ENCODE measurements at regions of chr3 and their contacts with region 1.

Region 1: DNA sequence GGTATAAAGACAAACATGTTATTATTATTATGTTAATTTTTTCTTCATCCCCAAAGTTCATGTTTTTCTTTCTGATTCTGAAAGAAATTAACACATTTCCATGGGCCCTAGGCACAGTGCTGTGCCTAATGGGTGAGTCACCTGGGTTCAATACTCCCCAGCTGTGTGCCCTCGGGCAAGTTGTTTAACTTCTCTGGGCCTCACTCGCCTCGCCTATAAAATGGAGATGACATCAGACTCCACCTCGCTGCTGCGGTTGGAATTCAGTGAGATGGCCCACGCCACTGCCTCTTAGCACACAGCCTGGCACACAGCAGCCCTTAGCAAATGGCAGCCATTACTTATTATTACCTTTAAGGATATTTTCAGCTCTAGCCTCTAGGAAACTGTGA is 22.6 kb downstream of the DNASE1L3 start:
- DNase-seq: no peak
- H3K4me3 Mint-ChIP-seq: no peak overlapping the region
- H3K27ac Mint-ChIP-seq: no peak overlapping the region
- H3K4me1 Mint-ChIP-seq: no peaks in the 10 kb centered on the region
- H3K27me3 Mint-ChIP-seq: no peaks in the 10 kb centered on the region
- CTCF ChIP-seq: no peak

Region 2: DNA sequence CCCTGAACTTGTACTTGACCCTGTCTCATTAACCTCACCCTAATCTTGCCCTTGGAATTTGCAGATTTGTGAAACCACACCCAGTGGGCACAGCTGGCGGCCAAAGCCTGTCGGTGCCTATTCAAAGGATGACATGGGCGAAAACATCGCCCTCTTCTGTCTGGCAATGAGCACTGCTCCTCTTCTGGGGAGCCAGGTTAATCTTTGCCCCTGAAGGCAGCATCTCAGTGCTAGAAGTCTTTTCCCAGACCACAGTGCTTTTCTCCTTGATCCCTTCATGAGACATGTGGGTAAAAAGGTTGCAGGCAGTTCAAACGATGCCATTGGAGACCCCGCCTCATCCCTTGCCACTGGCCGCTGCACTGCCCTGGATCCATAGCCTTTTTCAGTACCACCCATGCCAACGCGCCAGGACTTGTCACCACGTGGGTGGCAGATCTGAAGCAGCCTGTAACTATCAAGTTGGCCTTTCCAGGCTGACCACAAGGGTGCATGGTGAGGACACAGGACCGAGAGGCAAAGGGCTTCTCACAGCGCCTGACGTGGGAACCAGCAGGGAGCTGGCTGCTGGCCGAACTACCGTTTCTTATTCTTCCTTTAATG is 29.1 kb after region 1 on chr3:
- CTCF ChIA-PET with region 1: interaction called, 24 read pairs
- intact Hi-C with region 1: loop called (anchors 1 kb)
- DNase-seq: peak; percentile 64
- H3K4me3 Mint-ChIP-seq: peak overlapping the region; percentile 59
- H3K27ac Mint-ChIP-seq: no peak overlapping the region
- H3K4me1 Mint-ChIP-seq: peaks cover 25% of the 10 kb centered on the region
- H3K27me3 Mint-ChIP-seq: peaks cover 20% of the 10 kb centered on the region
- CTCF ChIP-seq: peak; percentile 70

Region 3: DNA sequence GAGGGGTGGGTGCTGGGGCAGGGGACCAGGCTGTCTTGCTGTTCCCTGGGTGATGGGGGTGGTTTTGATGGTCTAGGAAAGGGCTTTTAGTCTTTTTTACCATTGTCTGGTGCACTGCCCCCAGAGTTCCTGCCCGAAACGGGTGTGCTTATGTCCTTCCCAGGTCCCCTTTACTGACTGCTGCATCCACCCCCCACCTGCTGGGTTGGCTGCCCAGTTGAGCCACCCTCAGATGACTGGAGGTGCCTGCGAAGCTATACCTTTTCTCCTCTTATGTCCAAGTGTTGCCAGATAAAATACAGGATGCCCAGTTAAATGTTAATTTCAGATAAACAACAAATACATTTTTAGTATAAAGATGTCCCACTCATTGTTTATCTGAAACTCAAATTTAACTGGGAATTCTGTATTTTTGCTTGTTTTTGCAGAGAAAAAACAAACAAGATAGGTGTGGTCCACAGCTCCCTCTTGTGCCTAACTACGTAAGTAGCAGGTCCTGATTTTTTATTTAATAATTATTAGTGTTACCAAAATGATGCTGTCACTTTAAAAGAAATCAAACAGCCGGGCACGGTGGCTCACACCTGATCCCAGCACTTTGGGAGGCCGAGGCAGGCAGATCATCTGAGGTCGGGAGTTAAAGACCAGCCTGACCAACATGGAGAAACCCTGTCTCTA is 111.8 kb after region 1 on chr3:
- CTCF ChIA-PET with region 1: interaction called, 38 read pairs
- intact Hi-C with region 1: loop called (anchors 1 kb)
- DNase-seq: peak; percentile 14
- H3K4me3 Mint-ChIP-seq: no peak overlapping the region
- H3K27ac Mint-ChIP-seq: no peak overlapping the region
- H3K4me1 Mint-ChIP-seq: no peaks in the 10 kb centered on the region
- H3K27me3 Mint-ChIP-seq: peaks cover 21% of the 10 kb centered on the region
- CTCF ChIP-seq: peak; percentile 30

Region 4: DNA sequence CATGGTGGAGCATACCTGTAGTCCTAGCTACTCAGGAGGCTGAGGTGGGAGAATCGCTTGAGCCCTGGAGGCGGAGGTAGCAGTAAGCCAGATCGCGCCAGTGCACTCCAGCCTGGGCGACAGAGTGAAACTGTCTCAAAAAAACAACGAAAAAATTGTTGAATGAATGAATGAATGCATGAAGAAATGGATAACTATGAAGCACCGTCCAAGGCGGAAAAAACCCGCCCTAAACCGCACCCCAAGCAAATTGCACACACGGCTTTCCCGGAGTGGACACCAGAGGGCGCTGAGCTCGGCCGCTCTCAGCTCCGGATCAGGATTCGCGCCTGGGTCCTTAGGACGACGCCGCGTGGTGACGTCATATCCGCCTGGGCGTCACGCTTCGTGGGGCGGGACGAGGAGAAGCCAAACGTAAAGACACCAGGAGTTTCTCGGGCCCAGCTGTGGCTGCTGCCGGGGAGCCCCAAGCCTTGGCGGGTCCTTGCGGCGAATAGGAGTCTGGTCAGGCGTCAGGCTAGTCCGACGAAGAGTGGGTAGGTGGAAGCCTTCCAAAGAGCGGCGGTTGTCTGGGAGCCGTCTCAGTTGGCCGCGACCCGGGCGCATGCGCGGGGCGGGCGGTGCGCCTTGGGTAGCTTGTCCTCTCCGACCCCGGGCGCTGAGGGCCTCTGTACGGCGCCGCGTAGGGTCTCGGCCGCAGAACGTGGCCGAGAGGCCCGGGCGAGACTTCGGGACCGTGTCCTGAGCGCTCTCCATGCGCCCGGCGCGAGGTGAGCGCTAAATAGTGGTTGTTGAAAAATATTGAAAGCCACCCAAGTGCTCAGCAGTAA is 117.9 kb after region 1 on chr3 and contains the starts of genes HTD2 and RPP14:
- CTCF ChIA-PET with region 1: interaction called, 21 read pairs
- intact Hi-C with region 1: no loop called
- DNase-seq: peak; percentile 97
- H3K4me3 Mint-ChIP-seq: peak within 1 kb of the TSS; percentile 99
- H3K27ac Mint-ChIP-seq: peak within 1 kb of the TSS; percentile 94
- H3K4me1 Mint-ChIP-seq: no peaks in the 10 kb centered on the region
- H3K27me3 Mint-ChIP-seq: peaks cover 18% of the 10 kb centered on the region
- CTCF ChIP-seq: peak; percentile 77
- total RNA-seq, gene HTD2: 7.5 and 8.5 TPM in 2 replicates
- total RNA-seq, gene RPP14: 17.2 and 18.4 TPM in 2 replicates

Region 5: DNA sequence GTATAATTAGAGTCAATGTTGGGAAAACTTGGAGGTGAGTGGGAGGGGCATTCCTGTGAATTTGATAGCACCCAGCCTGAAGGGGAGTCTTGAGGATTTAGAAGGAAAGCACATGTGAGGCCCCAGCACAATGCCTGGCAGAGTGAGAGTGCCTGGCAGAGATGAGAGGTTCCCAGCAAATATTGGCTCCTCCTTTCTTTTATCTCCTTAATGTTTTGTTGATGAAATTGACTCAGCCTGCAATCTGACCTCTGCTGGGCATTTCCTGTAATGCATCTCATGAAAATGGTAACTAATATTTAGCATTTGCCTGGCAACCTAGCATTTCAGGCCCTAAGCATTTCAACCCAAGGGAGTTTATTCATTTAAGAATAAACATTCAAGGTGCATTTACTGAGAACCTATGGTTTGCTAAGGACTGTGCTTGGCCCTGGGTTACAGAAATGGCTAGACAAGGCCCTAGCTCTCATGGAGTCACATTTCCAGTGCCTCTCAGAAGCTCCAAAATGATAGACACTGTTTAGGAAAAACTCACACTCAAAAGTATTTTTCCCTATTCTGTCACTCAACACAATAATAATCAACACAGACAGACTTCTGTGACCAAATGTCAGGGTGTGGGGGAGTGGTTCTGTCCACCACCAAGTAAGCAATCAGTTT is 226.5 kb after region 1 on chr3:
- CTCF ChIA-PET with region 1: interaction called, 3 read pairs
- intact Hi-C with region 1: loop called (anchors 2 kb)
- DNase-seq: peak; percentile 49
- H3K4me3 Mint-ChIP-seq: no peak overlapping the region
- H3K27ac Mint-ChIP-seq: no peak overlapping the region
- H3K4me1 Mint-ChIP-seq: no peaks in the 10 kb centered on the region
- H3K27me3 Mint-ChIP-seq: no peaks in the 10 kb centered on the region
- CTCF ChIP-seq: peak; percentile 37